PC-3 (cell line): ENCODE measurements at regions of chr1 and their contacts with region 1.

Region 1: GRCh38 chr1:230681599-230681998 is 32.3 kb downstream of the AGT start:
- DNase-seq: peak; percentile 100
- ATAC-seq: peak; percentile 98
- H3K4me3 ChIP-seq: no peak overlapping the region
- H3K27ac ChIP-seq: peak overlapping the region; percentile 71
- H3K4me1 ChIP-seq: peaks cover 43% of the 10 kb centered on the region
- H3K27me3 ChIP-seq: no peaks in the 10 kb centered on the region
- CTCF ChIP-seq: no peak

Region 2: GRCh38 chr1:230632273-230632873 is 49.2 kb before region 1 on chr1:
- CTCF ChIA-PET with region 1: no interaction called
- POLR2A ChIA-PET with region 1: no interaction called
- intact Hi-C with region 1: loop called (anchors 1 kb)
- DNase-seq: peak; percentile 85
- ATAC-seq: peak; percentile 95
- H3K4me3 ChIP-seq: no peak overlapping the region
- H3K27ac ChIP-seq: no peak overlapping the region
- H3K4me1 ChIP-seq: no peaks in the 10 kb centered on the region
- H3K27me3 ChIP-seq: peaks cover 47% of the 10 kb centered on the region
- CTCF ChIP-seq: peak; percentile 98

Region 3: GRCh38 chr1:230642263-230642959 is 39.2 kb before region 1 on chr1 and contains the start of gene COG2:
- CTCF ChIA-PET with region 1: no interaction called
- POLR2A ChIA-PET with region 1: no interaction called
- intact Hi-C with region 1: loop called (anchors 1 kb)
- DNase-seq: peak; percentile 99
- ATAC-seq: peak; percentile 94
- H3K4me3 ChIP-seq: peak within 1 kb of the TSS; percentile 86
- H3K27ac ChIP-seq: peak within 1 kb of the TSS; percentile 35
- H3K4me1 ChIP-seq: peaks cover 25% of the 10 kb centered on the region
- H3K27me3 ChIP-seq: peaks cover 30% of the 10 kb centered on the region
- CTCF ChIP-seq: peak; percentile 100
- total RNA-seq, gene COG2: 42.0 and 51.0 TPM in 2 replicates

Region 4: GRCh38 chr1:230651235-230651634 is 30.4 kb before region 1 on chr1:
- CTCF ChIA-PET with region 1: no interaction called
- POLR2A ChIA-PET with region 1: no interaction called
- intact Hi-C with region 1: loop called (anchors 2 kb)
- DNase-seq: peak; percentile 32
- ATAC-seq: peak; percentile 92
- H3K4me3 ChIP-seq: no peak overlapping the region
- H3K27ac ChIP-seq: no peak overlapping the region
- H3K4me1 ChIP-seq: peaks cover 10% of the 10 kb centered on the region
- H3K27me3 ChIP-seq: no peaks in the 10 kb centered on the region
- CTCF ChIP-seq: no peak

Region 5: GRCh38 chr1:230713915-230714764 is 32.5 kb after region 1 on chr1 and contains the start of gene AGT:
- CTCF ChIA-PET with region 1: no interaction called
- POLR2A ChIA-PET with region 1: no interaction called
- intact Hi-C with region 1: no loop called
- DNase-seq: peak; percentile 95
- ATAC-seq: peak; percentile 90
- H3K4me3 ChIP-seq: no peak within 1 kb of the TSS
- H3K27ac ChIP-seq: no peak within 1 kb of the TSS
- H3K4me1 ChIP-seq: peaks cover 11% of the 10 kb centered on the region
- H3K27me3 ChIP-seq: no peaks in the 10 kb centered on the region
- CTCF ChIP-seq: no peak
- total RNA-seq, gene AGT: 0.35 TPM in 1 of 2 replicates, not detected in the other

Region 6: GRCh38 chr1:230744382-230744781 is 62.8 kb after region 1 on chr1:
- CTCF ChIA-PET with region 1: no interaction called
- POLR2A ChIA-PET with region 1: no interaction called
- intact Hi-C with region 1: loop called (anchors 5 kb)
- DNase-seq: peak; percentile 79
- ATAC-seq: peak; percentile 53
- H3K4me3 ChIP-seq: no peak overlapping the region
- H3K27ac ChIP-seq: no peak overlapping the region
- H3K4me1 ChIP-seq: peaks cover 23% of the 10 kb centered on the region
- H3K27me3 ChIP-seq: no peaks in the 10 kb centered on the region
- CTCF ChIP-seq: no peak

Region 7: DNA sequence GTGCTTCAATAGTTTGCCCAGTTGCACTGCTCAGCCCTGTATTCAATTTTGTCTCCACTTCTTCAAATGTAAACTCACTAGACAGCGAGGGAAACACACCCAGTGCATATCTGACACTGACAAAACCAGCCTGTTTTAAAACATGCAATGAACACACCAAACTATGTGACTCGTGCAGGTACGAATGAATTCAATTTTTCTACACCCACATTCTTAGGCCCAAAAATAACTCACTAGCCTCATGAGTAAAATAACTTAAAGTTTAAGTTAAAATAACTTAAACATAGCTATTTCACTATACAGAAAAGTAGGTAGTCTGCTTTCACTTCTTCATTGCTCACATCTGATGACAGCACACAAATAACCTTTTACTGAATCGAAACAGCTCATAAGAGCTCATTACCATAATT is 276.0 kb after region 1 on chr1:
- CTCF ChIA-PET with region 1: no interaction called
- POLR2A ChIA-PET with region 1: no interaction called
- intact Hi-C with region 1: no loop called
- DNase-seq: no peak
- ATAC-seq: no peak
- H3K4me3 ChIP-seq: no peak overlapping the region
- H3K27ac ChIP-seq: no peak overlapping the region
- H3K4me1 ChIP-seq: no peaks in the 10 kb centered on the region
- H3K27me3 ChIP-seq: no peaks in the 10 kb centered on the region
- CTCF ChIP-seq: no peak